ENCODE measurements at regions of chr19 and their contacts with region 1.

Region 1: GRCh38 chr19:11558881-11559828 is at the start of gene ELOF1:
- DNase-seq: peak; percentile 98
- H3K4me3 ChIP-seq: peak within 1 kb of the TSS; percentile 64 to 96
- H3K27ac ChIP-seq: peak within 1 kb of the TSS; percentile 46 to 68
- H3K4me1 ChIP-seq: peaks cover 5 to 7% of the 10 kb centered on the region in 2 experiments; a peak in 1 of 4 replicates
- H3K27me3 ChIP-seq: no peaks in the 10 kb centered on the region
- CTCF ChIP-seq: peak; percentile 40
- EP300 ChIP-seq: no peak
- RAD21 ChIP-seq: no peak
- polyA plus RNA-seq, gene ELOF1: 139 and 157 TPM in 2 replicates

Region 2: GRCh38 chr19:11535792-11536595 is 23.2 kb before region 1 on chr19:
- CTCF ChIA-PET with region 1: interaction called, 14 read pairs
- POLR2A ChIA-PET with region 1: interaction called, 5 read pairs
- DNase-seq: peak; percentile 99
- H3K4me3 ChIP-seq: peak overlapping the region; percentile 35 to 43; a peak in 3 of 4 replicates
- H3K27ac ChIP-seq: peak overlapping the region; percentile 64 to 65; a peak in 3 of 4 replicates
- H3K4me1 ChIP-seq: peaks cover 13 to 16% of the 10 kb centered on the region in 2 experiments; a peak in 2 of 4 replicates
- H3K27me3 ChIP-seq: no peaks in the 10 kb centered on the region
- CTCF ChIP-seq: peak; percentile 85
- EP300 ChIP-seq: no peak
- RAD21 ChIP-seq: peak; percentile 38; the same call in 1 of the 2 replicates

Region 3: GRCh38 chr19:11587302-11587974 is 28.3 kb after region 1 on chr19:
- CTCF ChIA-PET with region 1: interaction called, 22 read pairs
- POLR2A ChIA-PET with region 1: no interaction called
- DNase-seq: peak; percentile 85
- H3K4me3 ChIP-seq: peak overlapping the region in 1 of 2 experiments; percentile 57; a peak in 1 of 4 replicates
- H3K27ac ChIP-seq: no peak overlapping the region
- H3K4me1 ChIP-seq: no peaks in the 10 kb centered on the region; a peak in 1 of 4 replicates
- H3K27me3 ChIP-seq: no peaks in the 10 kb centered on the region
- CTCF ChIP-seq: peak; percentile 91
- EP300 ChIP-seq: no peak
- RAD21 ChIP-seq: peak; percentile 90